ENCODE measurements at regions of chr6 and their contacts with region 1.

Region 1: GRCh38 chr6:89829591-89830385 is at the start of gene CASP8AP2:
- DNase-seq: peak; percentile 90 to 95
- ATAC-seq: peak; percentile 98 to 99 (median 99)
- H3K4me3 ChIP-seq: peak within 1 kb of the TSS; percentile 95
- H3K27ac ChIP-seq: peak within 1 kb of the TSS; percentile 83
- H3K4me1 ChIP-seq: peaks cover 7% of the 10 kb centered on the region
- H3K27me3 ChIP-seq: no peaks in the 10 kb centered on the region
- CTCF ChIP-seq: no peak
- total RNA-seq, gene CASP8AP2: 8.6 to 14.4 (median 11.1) TPM

Region 2: DNA sequence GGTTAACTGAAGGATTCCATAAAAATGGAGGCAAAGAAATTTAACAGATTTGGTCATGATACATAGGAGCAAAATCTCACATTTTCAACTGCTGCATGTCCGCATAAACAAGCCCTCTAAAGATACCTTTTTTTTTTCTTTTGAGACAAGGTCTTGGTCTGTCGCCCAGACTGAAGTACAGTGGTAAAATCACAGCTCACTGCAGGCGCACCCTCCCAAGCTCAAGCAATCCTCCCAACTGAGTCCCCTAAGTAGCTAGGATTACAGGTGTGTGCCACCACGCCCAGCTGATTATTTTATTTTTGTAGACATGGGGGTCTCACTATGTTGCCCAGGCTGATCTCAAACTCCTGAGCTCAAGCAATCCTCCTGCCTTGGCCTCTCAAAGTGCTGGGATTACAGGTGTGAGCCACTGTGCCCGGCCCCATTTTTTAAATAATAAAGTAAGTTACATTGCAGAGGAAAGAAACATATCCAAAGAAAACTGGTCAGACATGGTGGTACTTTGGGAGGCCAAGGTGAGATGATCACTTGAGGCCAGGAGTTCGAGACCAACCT is 23.9 kb before region 1 on chr6:
- intact Hi-C with region 1: loop called in 1 of 2 experiments (anchors 1 kb)
- DNase-seq: no peak
- ATAC-seq: no peak
- H3K4me3 ChIP-seq: no peak overlapping the region
- H3K27ac ChIP-seq: no peak overlapping the region
- H3K4me1 ChIP-seq: no peaks in the 10 kb centered on the region
- H3K27me3 ChIP-seq: no peaks in the 10 kb centered on the region
- CTCF ChIP-seq: no peak